AG04449 (cell line): ENCODE measurements at regions of chr15 and their contacts with region 1.

Region 1: GRCh38 chr15:31128919-31129768 is 27.6 kb upstream of the TRPM1 start:
- DNase-seq: no peak
- H3K4me3 ChIP-seq: no peak overlapping the region
- CTCF ChIP-seq: peak; percentile 95

Region 2: GRCh38 chr15:30903497-30904201 is 225.5 kb before region 1 on chr15 and contains the start of gene FAN1:
- CTCF ChIA-PET with region 1: interaction called, 10 read pairs
- POLR2A ChIA-PET with region 1: no interaction called
- DNase-seq: peak; percentile 23
- H3K4me3 ChIP-seq: peak within 1 kb of the TSS; percentile 89
- CTCF ChIP-seq: no peak

Region 3: DNA sequence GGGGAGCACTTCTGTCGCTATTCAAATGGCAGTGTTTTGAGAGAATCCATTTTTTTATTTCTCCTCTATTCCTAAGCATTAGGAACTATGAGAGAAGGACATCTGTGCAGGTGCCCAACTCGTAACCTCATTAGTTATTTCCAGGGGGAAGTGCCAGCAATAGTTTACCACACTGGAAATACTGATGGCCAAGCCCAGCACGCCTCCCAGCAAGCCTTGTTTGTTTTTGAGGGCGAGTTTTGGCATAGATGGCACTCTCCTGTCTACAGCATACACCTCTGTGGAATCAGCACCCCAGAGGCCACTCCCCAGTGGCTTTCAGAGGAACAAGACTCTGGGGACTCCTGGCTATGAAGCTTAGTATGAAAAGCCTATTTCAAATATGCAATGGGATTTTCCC is 188.8 kb before region 1 on chr15:
- CTCF ChIA-PET with region 1: interaction called, 16 read pairs
- POLR2A ChIA-PET with region 1: no interaction called
- DNase-seq: no peak
- H3K4me3 ChIP-seq: no peak overlapping the region
- CTCF ChIP-seq: no peak

Region 4: GRCh38 chr15:30978328-30978727 is 150.8 kb before region 1 on chr15:
- CTCF ChIA-PET with region 1: interaction called, 36 read pairs
- POLR2A ChIA-PET with region 1: no interaction called
- DNase-seq: no peak
- H3K4me3 ChIP-seq: no peak overlapping the region
- CTCF ChIP-seq: no peak

Region 5: DNA sequence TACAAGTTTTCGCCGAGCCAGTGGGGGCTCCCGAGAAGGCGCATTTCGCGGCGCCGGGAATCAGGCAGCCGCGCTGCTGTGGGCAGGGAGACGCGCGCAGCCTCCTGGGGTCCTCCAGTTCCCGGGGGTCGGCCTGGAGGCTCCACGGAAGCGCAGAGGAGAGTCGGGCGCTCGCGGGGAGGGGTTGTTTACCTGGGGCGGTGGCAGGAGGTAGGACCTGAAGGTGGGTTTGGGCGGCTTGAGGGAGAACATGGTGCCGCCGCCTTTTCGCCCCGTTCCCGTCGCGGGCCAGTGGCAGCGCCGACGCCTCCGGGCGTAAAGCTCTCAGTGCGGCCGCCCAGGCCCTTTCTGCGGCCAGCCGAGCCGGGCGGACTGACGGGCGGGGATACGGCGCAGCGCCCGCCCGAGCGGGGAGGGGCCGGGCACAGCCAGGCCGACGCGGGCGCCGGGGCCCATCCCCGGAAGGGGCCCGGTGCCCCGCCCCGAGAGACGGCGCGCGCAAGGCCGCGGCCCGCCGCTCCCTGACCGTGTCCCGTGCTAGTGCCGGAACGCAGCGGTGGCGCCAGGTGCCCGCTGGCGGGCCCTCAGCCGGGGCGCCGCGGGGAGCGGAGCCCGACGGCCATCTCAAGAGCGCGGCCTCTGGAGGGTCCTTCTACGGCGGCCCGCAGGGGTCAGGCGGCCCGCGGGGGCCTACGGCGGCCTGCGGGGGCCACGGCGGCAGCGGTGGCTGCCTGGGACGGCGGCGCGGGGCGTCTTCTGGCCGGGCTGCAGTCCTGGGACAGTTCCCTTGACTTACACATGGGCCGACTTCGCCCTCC is 137.7 kb before region 1 on chr15 and contains the start of gene MTMR10:
- CTCF ChIA-PET with region 1: interaction called, 36 read pairs
- POLR2A ChIA-PET with region 1: interaction called, 4 read pairs
- DNase-seq: peak; percentile 12
- H3K4me3 ChIP-seq: peak within 1 kb of the TSS; percentile 88
- CTCF ChIP-seq: no peak

Region 6: GRCh38 chr15:31062310-31062847 is 66.8 kb before region 1 on chr15:
- CTCF ChIA-PET with region 1: no interaction called
- POLR2A ChIA-PET with region 1: no interaction called
- DNase-seq: no peak
- H3K4me3 ChIP-seq: peak overlapping the region; percentile 39
- CTCF ChIP-seq: no peak

Region 7: GRCh38 chr15:31141792-31142191 is 12.6 kb after region 1 on chr15:
- CTCF ChIA-PET with region 1: interaction called, 17 read pairs
- POLR2A ChIA-PET with region 1: no interaction called
- DNase-seq: no peak
- H3K4me3 ChIP-seq: no peak overlapping the region
- CTCF ChIP-seq: no peak